Gastrocnemius medialis (tissue), 4 donors: ENCODE measurements at regions of chr19 and their contacts with region 1.

Region 1: GRCh38 chr19:55653758-55654539 is 886 bp upstream of the U2AF2 start:
- DNase-seq: peak; percentile 99 to 100
- ATAC-seq: peak; percentile 76 to 77
- H3K4me3 ChIP-seq: peak overlapping the region; percentile 75 to 98 (median 90)
- H3K27ac ChIP-seq: peak overlapping the region; percentile 98 to 100 (median 99)
- H3K4me1 ChIP-seq: peaks cover 34 to 44% of the 10 kb centered on the region in 2 donors
- H3K27me3 ChIP-seq: no peaks in the 10 kb centered on the region
- CTCF ChIP-seq: peak; percentile 95 to 100 (median 99)
- POLR2A ChIP-seq: peak; percentile 88 to 91

Region 2: DNA sequence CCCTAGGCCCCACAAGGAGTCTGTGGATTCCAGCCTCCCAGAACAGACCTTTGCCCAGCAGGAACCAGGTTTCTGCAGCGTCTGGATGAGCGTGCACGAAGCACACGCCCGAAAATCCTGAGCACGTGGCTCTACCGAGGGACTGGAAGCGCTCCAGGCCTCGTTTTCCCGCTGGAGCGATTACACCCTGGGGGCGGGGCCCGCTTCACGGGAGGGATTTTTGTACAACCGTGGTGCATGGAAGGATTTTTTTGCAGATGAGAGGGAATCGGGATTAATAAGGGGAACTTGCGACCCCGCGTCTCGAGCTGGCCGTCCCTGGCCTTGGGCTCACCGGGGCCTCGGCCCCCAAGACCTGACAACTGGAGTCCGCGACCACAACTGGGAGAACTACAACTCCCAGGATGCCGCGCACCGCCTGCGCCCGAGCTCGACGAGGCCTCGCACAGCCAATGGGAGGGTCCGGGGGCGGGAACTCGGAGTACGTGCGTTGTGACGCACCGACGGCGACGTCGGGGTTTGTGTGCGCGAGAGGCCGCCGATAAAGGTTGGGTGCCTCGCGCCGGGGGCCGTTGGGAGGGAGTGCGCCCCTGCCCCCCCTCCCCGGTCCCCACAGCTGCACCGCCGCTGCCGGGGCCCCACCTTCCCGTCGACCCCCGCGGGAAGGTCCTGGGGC is 177.7 kb before region 1 on chr19 and contains the start of gene ZNF628:
- in situ Hi-C with region 1: no loop called
- intact Hi-C with region 1: loop called (anchors 1 kb)
- DNase-seq: peak; percentile 98
- ATAC-seq: peak; percentile 93 to 95
- H3K4me3 ChIP-seq: peak within 1 kb of the TSS; percentile 59 to 90 (median 70)
- H3K27ac ChIP-seq: peak within 1 kb of the TSS; percentile 92 to 97 (median 96)
- H3K4me1 ChIP-seq: peaks cover 16 to 25% of the 10 kb centered on the region in 2 donors
- H3K27me3 ChIP-seq: peaks cover 0 to 3% (median 0%) of the 10 kb centered on the region in 3 donors
- CTCF ChIP-seq: no peak
- POLR2A ChIP-seq: peak; percentile 82 to 85
- total RNA-seq, gene ZNF628: 7.4 to 22.3 (median 14.1) TPM

Region 3: GRCh38 chr19:55590622-55591021 is 63.3 kb before region 1 on chr19:
- in situ Hi-C with region 1: no loop called
- intact Hi-C with region 1: no loop called
- DNase-seq: no peak
- ATAC-seq: no peak
- H3K4me3 ChIP-seq: no peak overlapping the region
- H3K27ac ChIP-seq: no peak overlapping the region
- H3K4me1 ChIP-seq: peaks cover 23 to 27% of the 10 kb centered on the region in 2 donors
- H3K27me3 ChIP-seq: peaks cover 3 to 9% (median 6%) of the 10 kb centered on the region in 3 donors
- CTCF ChIP-seq: no peak
- POLR2A ChIP-seq: no peak

Region 4: GRCh38 chr19:55605207-55605636 is 48.7 kb before region 1 on chr19:
- in situ Hi-C with region 1: no loop called
- intact Hi-C with region 1: no loop called
- DNase-seq: peak; percentile 96
- ATAC-seq: peak; percentile 77 to 79
- H3K4me3 ChIP-seq: peak overlapping the region; percentile 68 to 97 (median 80)
- H3K27ac ChIP-seq: peak overlapping the region; percentile 91 to 99 (median 94)
- H3K4me1 ChIP-seq: peaks cover 27 to 38% of the 10 kb centered on the region in 2 donors
- H3K27me3 ChIP-seq: no peaks in the 10 kb centered on the region
- CTCF ChIP-seq: no peak
- POLR2A ChIP-seq: peak in 1 of 2 donors; percentile 36

Region 5: DNA sequence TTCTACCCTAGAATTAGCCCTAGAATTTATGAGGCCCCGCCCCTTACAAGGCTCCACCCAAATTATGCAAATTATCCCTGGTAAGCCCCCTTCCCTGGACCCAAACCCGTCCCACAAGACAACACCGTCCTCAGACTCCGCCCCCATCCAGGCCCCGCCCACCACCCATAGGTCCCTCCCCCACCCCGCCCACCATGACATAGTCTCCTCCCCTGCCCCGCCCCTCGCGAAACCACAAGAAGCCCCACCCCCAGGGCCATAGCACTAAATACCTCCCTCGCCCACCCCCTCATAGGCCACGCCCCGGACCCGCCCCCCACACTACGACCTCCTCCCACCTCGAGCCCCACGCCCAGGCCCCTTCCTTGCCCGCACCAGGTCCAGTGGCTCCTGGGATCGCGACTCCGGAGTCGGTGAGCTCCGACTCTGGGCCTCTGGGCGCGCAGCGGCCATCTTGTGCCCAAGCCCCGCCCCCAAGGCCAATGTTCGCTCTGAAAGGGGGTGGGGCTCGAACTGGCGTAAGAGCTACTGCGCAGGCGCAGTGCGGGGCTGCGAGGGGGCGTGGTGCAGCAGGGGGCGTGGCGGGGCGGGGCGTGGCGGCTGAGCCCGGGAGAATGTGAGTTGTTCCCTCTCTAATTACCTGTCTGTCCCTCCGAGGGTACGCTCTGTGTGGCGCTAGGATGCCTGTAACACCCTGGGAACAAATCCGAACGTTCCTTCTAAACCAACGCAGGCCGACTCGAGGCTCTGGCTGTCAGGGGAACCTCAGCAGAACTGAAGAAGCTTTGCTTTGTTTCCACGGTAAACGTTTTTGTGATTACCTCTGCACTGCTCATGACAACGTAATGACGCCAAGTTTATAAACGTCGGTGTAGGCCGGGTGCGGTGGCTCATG is 29.6 kb before region 1 on chr19 and contains the start of gene ZNF784:
- in situ Hi-C with region 1: no loop called
- intact Hi-C with region 1: loop called (anchors 2 kb)
- DNase-seq: peak; percentile 89 to 91
- ATAC-seq: peak; percentile 76 to 83
- H3K4me3 ChIP-seq: peak within 1 kb of the TSS; percentile 71 to 77 (median 74)
- H3K27ac ChIP-seq: peak within 1 kb of the TSS; percentile 97 to 99 (median 98)
- H3K4me1 ChIP-seq: peaks cover 30 to 37% of the 10 kb centered on the region in 2 donors
- H3K27me3 ChIP-seq: no peaks in the 10 kb centered on the region
- CTCF ChIP-seq: no peak
- POLR2A ChIP-seq: peak; percentile 38 to 49
- total RNA-seq, gene ZNF784: 6.0 to 10.0 (median 8.2) TPM

Region 6: GRCh38 chr19:55632463-55632834 is 21.5 kb before region 1 on chr19:
- in situ Hi-C with region 1: no loop called
- intact Hi-C with region 1: loop called (anchors 1 kb)
- DNase-seq: peak; percentile 82 to 91
- ATAC-seq: peak; percentile 59 to 70
- H3K4me3 ChIP-seq: no peak overlapping the region
- H3K27ac ChIP-seq: peak overlapping the region; percentile 90 to 100 (median 98)
- H3K4me1 ChIP-seq: peaks cover 24 to 27% of the 10 kb centered on the region in 2 donors
- H3K27me3 ChIP-seq: no peaks in the 10 kb centered on the region
- CTCF ChIP-seq: peak; percentile 86 to 95 (median 91)
- POLR2A ChIP-seq: no peak

Region 7: DNA sequence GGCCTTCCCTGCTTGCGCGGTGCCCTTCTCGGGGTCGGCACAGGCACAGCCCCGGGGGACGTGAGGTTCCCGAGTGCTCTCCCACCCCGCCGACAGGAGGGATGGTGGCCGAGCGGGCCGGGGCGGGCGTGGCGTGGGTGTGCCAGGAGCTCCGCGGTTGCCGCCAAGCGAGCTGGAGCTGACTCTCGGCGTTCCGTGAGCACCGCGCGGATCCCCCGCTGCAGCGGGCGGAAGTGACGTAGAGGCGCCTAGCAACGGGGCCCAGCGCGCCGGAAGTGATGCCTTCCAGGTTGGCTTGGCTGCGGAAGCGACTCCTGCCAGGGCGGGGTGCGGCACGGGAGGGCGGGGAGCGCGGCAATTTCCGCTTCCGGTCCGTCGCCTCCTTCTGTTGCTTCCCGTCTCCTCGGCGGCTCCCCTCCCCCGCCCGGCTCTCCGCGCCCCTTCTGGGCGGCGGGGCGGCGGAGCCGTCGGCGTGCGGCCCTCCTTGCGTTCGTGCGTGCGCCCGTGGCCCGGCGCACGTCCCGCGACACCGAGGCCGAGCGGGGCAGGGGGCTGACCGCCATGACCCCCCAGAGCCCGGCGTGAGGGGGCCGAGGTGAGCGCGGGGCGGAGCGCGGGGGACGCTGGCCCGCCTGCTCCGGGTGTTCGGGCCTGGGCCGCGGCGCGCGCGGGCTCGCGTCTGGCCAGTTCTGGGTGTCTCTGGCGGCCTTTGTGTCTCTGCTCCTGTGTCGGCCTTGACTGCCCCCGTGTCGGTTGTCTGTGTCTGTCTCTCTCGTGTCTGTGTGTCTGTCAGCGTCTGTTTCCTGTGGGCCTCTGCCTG is 21.1 kb after region 1 on chr19 and contains the start of gene EPN1:
- in situ Hi-C with region 1: no loop called
- intact Hi-C with region 1: loop called (anchors 1 kb)
- DNase-seq: peak; percentile 95
- ATAC-seq: peak; percentile 93
- H3K4me3 ChIP-seq: peak within 1 kb of the TSS; percentile 76 to 89 (median 84)
- H3K27ac ChIP-seq: peak within 1 kb of the TSS; percentile 77 to 95 (median 87)
- H3K4me1 ChIP-seq: peaks cover 31 to 38% of the 10 kb centered on the region in 2 donors
- H3K27me3 ChIP-seq: no peaks in the 10 kb centered on the region
- CTCF ChIP-seq: peak in 2 of 5 experiments; percentile 7 to 8
- POLR2A ChIP-seq: peak; percentile 57 to 70
- total RNA-seq, gene EPN1: 58.7 to 214 (median 190) TPM

Region 8: DNA sequence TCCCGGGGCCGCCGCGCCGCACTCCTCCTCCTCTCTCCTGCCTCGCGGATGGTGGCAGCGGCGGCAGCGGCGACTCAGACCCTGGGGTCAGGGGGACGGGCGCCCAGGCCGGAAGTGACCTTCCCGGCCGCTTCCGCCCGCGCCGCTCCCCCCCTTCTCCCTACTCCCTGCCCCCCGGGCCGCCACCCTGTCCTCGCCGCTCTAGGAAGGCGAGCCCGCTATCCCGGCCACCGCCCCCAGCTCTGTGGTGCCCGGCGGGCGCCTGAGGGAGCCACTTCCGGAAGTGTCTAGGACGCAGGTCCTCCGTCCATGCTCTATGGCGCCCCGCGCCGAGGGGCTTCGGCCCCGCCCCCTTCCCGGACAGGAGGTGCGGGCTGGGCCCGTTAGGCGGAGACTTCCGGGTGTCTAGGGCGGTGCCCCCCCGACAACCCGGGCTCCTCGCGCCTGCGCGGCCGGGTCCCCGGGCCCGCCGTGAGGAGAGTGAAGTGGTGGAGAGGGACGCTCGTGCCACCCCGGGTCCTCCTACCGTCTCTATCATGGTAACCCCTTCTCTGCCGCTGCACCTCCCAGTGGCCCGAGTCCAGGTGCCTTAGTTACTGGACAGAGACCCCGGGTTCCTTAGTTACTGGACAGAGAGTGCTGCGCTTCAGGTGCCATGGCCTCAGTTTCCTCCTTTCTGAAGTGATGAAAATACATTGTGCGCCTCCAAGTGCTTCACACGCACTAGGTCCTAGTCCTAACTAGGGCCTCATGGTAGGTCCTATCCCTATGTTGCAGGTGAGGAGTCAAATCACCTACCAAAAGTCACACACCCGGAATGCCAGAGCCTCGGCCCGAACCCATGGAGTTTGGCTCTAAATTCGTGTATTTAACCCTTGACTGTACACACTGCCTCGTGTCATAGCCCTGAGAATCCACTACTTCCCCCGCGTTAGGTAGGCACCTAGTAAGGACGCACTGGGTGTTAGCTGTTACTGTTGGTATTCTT is 467.5 kb after region 1 on chr19 and contains the start of gene ZNF787:
- in situ Hi-C with region 1: no loop called
- intact Hi-C with region 1: loop called (anchors 1 kb)
- DNase-seq: peak; percentile 95 to 99
- ATAC-seq: peak; percentile 77 to 85
- H3K4me3 ChIP-seq: peak within 1 kb of the TSS; percentile 79 to 93 (median 88)
- H3K27ac ChIP-seq: peak within 1 kb of the TSS; percentile 92 to 99 (median 98)
- H3K4me1 ChIP-seq: peaks cover 35 to 54% of the 10 kb centered on the region in 2 donors
- H3K27me3 ChIP-seq: no peaks in the 10 kb centered on the region
- CTCF ChIP-seq: no peak
- POLR2A ChIP-seq: peak; percentile 54 to 60
- total RNA-seq, gene ZNF787: 16.7 to 43.0 (median 26.5) TPM

Region 9: DNA sequence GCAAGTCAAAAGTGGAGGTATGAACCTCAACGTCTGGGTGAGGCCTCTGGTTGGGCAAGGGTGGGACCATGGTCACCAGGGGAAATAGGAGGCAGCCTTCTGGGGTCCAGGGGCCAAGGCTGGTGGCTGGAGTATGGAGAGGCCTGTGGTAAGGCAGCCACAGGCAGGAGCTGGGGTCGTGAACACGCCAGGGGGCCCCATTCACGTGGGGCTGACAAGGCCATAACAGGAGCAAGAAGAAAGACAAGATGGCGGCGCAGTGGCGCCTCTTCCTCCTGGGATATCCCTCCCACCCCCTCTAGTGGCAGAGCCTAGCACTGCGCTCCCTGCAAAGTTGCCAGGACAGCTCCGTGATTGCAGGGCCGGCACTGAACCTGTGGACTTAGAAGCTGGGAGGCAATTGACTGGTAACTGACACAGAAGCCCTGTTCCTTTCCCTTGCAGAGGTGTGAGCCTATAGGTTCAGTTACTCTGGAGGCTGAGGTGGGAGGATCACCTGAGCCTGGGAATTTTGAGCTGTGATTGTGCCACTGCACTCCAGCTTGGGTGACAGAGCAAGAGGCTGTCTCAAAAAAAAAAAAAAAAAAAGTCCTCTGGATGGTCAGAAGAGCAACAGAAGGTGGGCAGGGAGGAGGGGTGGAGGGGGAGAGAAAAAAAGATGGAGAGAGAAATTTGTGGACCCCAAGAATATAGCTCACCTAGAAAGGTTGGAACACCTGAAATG is 598.9 kb after region 1 on chr19:
- in situ Hi-C with region 1: no loop called
- intact Hi-C with region 1: no loop called
- DNase-seq: peak in 1 of 2 donors; percentile 28
- ATAC-seq: no peak
- H3K4me3 ChIP-seq: no peak overlapping the region
- H3K27ac ChIP-seq: no peak overlapping the region
- H3K4me1 ChIP-seq: no peaks in the 10 kb centered on the region
- H3K27me3 ChIP-seq: no peaks in the 10 kb centered on the region
- CTCF ChIP-seq: peak in 4 of 5 experiments; percentile 35 to 67 (median 56)
- POLR2A ChIP-seq: no peak